ENCODE measurements at regions of chr9 and their contacts with region 1.

Region 1: DNA sequence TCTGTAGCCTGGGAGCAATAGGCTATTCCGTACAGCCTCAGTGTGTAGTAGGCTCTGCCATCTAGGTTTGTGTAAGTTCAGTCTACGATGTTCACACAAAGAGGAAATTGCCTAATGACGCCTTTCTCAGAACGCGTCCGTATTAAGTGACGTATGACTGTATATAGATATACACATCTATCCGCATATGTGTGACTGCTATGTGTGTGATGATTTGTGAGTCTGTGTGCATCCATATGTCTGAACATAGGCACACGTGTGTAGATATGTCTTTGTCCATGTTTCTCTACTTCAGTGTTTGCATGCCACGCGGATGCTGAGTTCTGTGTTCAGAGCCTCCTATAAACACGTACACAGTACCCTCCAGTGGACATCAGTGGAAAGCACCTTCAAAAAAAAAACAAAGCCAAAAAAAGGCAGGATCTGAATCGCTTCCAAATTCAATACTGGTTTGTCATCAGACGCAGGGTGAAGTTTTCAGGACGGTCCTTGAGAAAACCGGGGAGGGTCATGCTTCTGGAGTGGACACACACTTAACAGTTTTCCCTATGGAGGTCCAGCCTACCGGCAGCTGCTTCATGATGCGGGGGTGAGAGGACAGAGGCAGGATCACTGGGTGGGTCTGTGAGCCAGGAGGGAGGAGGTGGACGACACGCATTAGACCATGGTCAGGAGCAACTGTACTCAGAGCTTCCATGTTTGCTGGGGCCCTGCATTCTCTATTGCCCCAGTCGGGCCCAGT is 29.5 kb upstream of the ALDH1B1 start:
- DNase-seq: peak; percentile 46
- ATAC-seq: peak; percentile 83 to 88

Region 2: DNA sequence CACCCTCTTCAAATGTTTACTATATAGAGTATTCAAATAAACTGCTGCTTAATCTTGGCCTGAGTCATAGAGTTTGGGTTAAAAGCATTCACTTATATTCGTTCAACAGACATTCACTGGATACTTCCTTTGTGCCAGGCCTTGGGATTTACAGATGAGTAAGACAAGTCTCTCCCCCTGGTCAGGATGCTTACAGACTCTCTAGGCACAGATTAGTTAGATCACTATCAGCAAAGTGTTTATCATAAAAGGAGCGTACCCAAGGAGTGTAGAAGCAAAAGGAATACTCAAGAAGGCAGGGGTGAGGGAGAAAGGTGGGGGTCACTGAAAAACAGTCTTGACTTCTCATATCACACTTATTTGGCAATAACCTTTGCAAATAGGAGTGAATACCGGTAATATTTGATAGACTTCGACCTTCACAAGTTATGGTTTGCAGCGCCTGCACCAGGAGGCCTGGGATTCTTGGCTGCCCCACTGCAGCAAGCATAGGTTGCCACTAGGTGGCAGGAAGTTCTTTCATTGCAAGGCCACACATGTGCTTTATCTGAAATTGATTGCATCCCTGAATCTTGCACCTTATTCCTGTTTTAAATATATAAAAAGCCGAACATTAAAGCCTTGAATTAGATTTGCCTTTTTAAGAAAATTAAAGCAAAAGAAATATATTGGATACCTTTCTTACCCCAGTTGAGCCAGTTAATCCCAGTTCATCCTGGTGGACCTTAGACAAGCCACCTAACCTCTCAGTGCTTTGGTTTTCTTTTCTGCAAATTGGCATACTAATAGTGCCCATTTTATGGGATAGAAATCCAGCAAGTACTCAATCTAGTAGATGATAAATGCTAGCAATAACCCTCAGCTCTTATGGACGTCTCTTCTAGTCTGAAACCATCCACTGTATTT is 615.9 kb before region 1 on chr9:
- intact Hi-C with region 1: loop called in 1 of 2 experiments (anchors 10 kb)
- DNase-seq: peak; percentile 46
- ATAC-seq: peak; percentile 77 to 78

Region 3: GRCh38 chr9:37913480-37914153 is 449.4 kb before region 1 on chr9:
- intact Hi-C with region 1: loop called (anchors 5 to 10 kb)
- DNase-seq: peak; percentile 77
- ATAC-seq: peak; percentile 78 to 90

Region 4: DNA sequence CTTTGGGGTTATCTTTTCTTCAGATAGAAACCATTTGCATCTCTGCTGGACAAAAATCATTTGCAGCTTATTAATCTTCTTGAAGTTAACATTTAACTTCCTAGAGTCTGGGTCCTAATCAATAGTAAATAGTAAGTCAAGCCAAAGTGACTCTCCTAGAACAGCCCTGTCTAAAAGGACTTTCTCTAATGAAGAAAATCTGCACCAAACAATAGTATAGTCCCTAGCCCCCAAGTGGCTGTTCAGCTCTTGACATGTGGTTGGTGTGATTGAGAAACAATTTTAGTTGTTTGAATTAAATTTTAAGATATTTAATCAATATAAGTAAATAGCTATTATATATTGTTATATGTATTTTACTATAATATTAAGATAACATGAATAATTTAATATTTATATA is 229.4 kb before region 1 on chr9:
- intact Hi-C with region 1: no loop called
- DNase-seq: no peak
- ATAC-seq: no peak

Region 5: DNA sequence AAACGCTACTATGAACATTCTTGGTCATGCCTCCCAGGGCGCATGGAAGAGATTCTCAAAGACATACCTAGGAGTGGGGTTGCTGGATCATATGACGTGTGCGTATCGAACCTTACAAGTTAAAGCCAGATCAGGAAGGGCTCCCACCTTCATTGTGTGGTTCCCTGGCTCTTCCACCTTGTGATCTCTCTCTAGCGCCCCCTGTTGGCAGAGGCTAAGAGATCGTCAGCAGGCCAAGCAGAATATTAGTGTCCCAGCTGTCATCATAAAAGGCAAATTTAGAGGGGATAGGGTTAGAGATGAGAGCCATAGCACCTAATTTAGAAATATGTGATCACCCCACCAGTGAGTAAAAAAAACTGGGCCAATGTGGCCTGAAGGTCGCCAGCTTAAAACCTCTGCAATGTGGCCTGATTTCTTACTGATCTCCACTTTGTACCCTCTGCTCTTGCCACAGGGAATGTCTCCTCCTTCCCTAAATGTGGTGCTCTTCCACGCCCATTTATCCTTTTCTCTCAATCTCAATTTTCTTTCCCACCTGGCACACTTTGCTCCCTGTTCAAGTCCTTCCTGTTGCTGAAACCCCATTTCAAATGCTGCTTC is 202.3 kb before region 1 on chr9:
- intact Hi-C with region 1: loop called in 1 of 2 experiments (anchors 2 kb)
- DNase-seq: peak; percentile 73
- ATAC-seq: peak; percentile 33 to 57

Region 6: GRCh38 chr9:38417003-38417945 is 54.3 kb after region 1 on chr9:
- intact Hi-C with region 1: no loop called
- DNase-seq: no peak
- ATAC-seq: peak in 1 of 2 donors; percentile 50

Region 7: GRCh38 chr9:38507587-38507986 is 144.6 kb after region 1 on chr9:
- intact Hi-C with region 1: no loop called
- DNase-seq: no peak
- ATAC-seq: no peak